ENCODE measurements at regions of chr1 and their contacts with region 1.

Region 1: GRCh38 chr1:198157241-198157846 is 546 bp downstream of the NEK7 start:
- DNase-seq: peak; percentile 63 to 81 (median 79)
- ATAC-seq: peak; percentile 65
- H3K4me3 ChIP-seq: peak overlapping the region; percentile 99
- H3K4me3 Mint-ChIP-seq: peak overlapping the region; percentile 97 to 100 (median 100)
- H3K27ac ChIP-seq: peak overlapping the region; percentile 96
- H3K27ac Mint-ChIP-seq: peak overlapping the region; percentile 97 to 100 (median 99)
- H3K4me1 ChIP-seq: peaks cover 28 to 33% of the 10 kb centered on the region in 2 donors
- H3K4me1 Mint-ChIP-seq: peaks cover 26 to 53% (median 48%) of the 10 kb centered on the region in 7 donors
- H3K27me3 ChIP-seq: no peaks in the 10 kb centered on the region
- H3K27me3 Mint-ChIP-seq: no peaks in the 10 kb centered on the region

Region 2: DNA sequence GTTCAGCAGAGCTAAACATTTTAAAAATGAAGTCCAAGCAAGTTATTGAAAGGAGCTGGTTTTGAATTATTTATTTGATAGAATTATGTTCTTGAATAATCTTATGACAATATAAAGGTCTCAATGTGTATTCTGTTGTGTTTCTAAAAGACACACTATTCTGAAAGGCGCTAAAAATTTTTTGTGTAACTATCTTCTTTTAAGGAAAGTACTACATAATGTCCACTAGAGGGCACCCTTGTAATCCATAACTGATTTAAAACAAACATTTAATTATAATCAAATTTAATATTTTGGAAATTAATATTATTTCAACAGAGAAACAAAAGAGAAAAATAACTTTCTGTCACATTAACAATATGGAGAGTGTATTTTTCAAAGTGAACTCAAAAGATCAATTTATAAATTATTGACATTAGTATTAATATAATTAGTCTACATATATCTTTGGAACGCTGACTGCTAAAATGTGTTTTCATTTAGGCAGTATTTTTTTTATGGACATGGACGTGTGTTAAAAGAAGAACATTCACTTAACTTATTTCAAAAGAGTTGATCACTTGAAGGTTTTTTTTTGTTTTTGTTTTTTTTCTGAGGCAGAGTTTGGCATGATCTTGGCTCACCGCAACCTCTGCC is 630.5 kb before region 1 on chr1:
- CTCF ChIA-PET with region 1: no interaction called
- POLR2A ChIA-PET with region 1: no interaction called
- intact Hi-C with region 1: loop called in 1 of 2 experiments (anchors 2 kb)
- DNase-seq: peak in 6 of 9 donors; percentile 9 to 53 (median 37)
- ATAC-seq: peak; percentile 69
- H3K4me3 ChIP-seq: no peak overlapping the region
- H3K4me3 Mint-ChIP-seq: no peak overlapping the region
- H3K27ac ChIP-seq: no peak overlapping the region
- H3K27ac Mint-ChIP-seq: no peak overlapping the region
- H3K4me1 ChIP-seq: no peaks in the 10 kb centered on the region
- H3K4me1 Mint-ChIP-seq: no peaks in the 10 kb centered on the region
- H3K27me3 ChIP-seq: no peaks in the 10 kb centered on the region
- H3K27me3 Mint-ChIP-seq: no peaks in the 10 kb centered on the region

Region 3: DNA sequence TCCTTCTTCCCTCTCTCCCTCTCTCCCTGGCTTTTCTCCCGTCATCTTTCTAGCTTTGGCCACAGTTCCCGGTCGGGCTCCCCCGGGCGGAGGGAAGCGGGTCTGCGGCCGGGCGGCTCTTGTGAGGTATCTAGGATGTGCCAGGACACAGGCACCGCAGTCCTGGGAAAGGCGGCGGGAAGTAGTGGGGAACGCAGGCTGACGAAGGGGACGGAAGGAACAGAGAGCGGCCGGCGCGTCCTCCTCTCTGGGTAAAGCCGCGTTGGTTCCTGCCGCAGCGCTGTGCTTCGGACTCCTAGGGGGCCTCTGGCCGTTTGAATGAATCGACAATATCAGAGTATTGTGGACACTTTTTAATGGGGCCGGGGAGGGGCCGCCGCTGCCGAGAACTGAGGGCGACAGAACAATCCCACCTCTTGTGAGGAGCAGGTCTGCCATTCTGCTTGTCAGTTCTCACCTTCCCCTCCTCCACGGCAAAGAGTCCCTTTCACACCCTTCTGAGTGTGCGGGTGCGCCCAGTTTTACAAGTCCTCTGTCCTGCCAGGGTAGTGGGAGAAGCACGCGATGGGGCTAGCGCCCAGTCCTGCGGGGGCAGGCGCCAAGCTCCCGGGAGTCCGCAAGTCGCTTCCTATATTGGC is 241.4 kb before region 1 on chr1:
- CTCF ChIA-PET with region 1: no interaction called
- POLR2A ChIA-PET with region 1: no interaction called
- intact Hi-C with region 1: loop called (anchors 2 kb)
- DNase-seq: peak in 1 of 9 donors; percentile 9
- ATAC-seq: no peak
- H3K4me3 ChIP-seq: no peak overlapping the region
- H3K4me3 Mint-ChIP-seq: peak overlapping the region in 9 of 10 donors; percentile 44 to 83 (median 68)
- H3K27ac ChIP-seq: no peak overlapping the region
- H3K27ac Mint-ChIP-seq: peak overlapping the region in 1 of 9 donors; percentile 60
- H3K4me1 ChIP-seq: peaks cover 59 to 72% of the 10 kb centered on the region in 2 donors
- H3K4me1 Mint-ChIP-seq: peaks cover 60 to 93% (median 85%) of the 10 kb centered on the region in 7 donors
- H3K27me3 ChIP-seq: peaks cover 69 to 84% of the 10 kb centered on the region in 2 donors
- H3K27me3 Mint-ChIP-seq: peaks cover 92 to 100% (median 96%) of the 10 kb centered on the region in 5 donors

Region 4: GRCh38 chr1:198175423-198176170 is 18.3 kb after region 1 on chr1:
- CTCF ChIA-PET with region 1: interaction called, 12 read pairs
- POLR2A ChIA-PET with region 1: interaction called, 150 read pairs
- intact Hi-C with region 1: loop called (anchors 1 to 2 kb)
- DNase-seq: peak in 7 of 9 donors; percentile 29 to 63 (median 51)
- ATAC-seq: peak; percentile 80
- H3K4me3 ChIP-seq: peak overlapping the region; percentile 8
- H3K4me3 Mint-ChIP-seq: peak overlapping the region; percentile 32 to 85 (median 67)
- H3K27ac ChIP-seq: peak overlapping the region; percentile 59
- H3K27ac Mint-ChIP-seq: peak overlapping the region; percentile 19 to 97 (median 93)
- H3K4me1 ChIP-seq: peaks cover 80 to 83% of the 10 kb centered on the region in 2 donors
- H3K4me1 Mint-ChIP-seq: peaks cover 64 to 91% (median 84%) of the 10 kb centered on the region in 7 donors
- H3K27me3 ChIP-seq: no peaks in the 10 kb centered on the region
- H3K27me3 Mint-ChIP-seq: no peaks in the 10 kb centered on the region

Region 5: GRCh38 chr1:198359024-198359653 is 201.8 kb after region 1 on chr1:
- CTCF ChIA-PET with region 1: no interaction called
- POLR2A ChIA-PET with region 1: no interaction called
- intact Hi-C with region 1: loop called (anchors 1 to 5 kb)
- DNase-seq: peak in 5 of 9 donors; percentile 3 to 17 (median 7)
- ATAC-seq: no peak
- H3K4me3 ChIP-seq: no peak overlapping the region
- H3K4me3 Mint-ChIP-seq: no peak overlapping the region
- H3K27ac ChIP-seq: no peak overlapping the region
- H3K27ac Mint-ChIP-seq: no peak overlapping the region
- H3K4me1 ChIP-seq: no peaks in the 10 kb centered on the region
- H3K4me1 Mint-ChIP-seq: peaks cover 0 to 3% (median 0%) of the 10 kb centered on the region in 7 donors
- H3K27me3 ChIP-seq: no peaks in the 10 kb centered on the region
- H3K27me3 Mint-ChIP-seq: peaks cover 0 to 21% (median 3%) of the 10 kb centered on the region in 5 donors

Region 6: DNA sequence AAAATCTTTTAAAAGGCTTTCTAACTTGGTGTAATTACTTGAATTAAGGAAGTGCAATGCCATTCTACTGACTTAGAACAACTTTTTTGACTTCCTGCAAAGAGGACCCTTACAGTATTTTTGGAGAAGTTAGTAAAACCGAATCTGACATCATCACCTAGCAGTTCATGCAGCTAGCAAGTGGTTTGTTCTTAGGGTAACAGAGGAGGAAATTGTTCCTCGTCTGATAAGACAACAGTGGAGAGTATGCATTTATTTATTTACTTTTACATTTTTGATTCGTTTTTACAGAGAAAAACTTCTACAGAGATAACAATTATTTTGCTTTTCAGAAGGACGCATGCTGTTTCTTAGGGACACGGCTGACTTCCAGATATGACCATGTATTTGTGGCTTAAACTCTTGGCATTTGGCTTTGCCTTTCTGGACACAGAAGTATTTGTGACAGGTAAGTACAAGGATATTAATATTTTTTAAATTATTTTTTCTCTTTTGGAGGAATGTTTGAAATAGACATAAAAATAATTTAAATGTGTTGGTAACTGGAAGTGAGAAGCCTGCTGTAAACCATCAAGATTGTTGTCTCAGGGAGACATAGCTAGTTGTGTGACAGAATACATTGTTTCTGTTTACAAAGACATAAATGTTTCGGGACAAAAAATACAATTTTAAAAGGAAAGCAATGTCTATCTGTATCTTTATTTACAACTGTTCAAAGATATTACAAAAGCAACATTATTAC is 481.7 kb after region 1 on chr1 and contains the start of gene PTPRC:
- CTCF ChIA-PET with region 1: no interaction called
- POLR2A ChIA-PET with region 1: no interaction called
- intact Hi-C with region 1: loop called (anchors 5 kb)
- DNase-seq: peak in 7 of 9 donors; percentile 46 to 78 (median 68)
- ATAC-seq: peak; percentile 81
- H3K4me3 ChIP-seq: peak within 1 kb of the TSS; percentile 81
- H3K4me3 Mint-ChIP-seq: peak within 1 kb of the TSS; percentile 77 to 100 (median 92)
- H3K27ac ChIP-seq: peak within 1 kb of the TSS; percentile 94
- H3K27ac Mint-ChIP-seq: peak within 1 kb of the TSS; percentile 86 to 98 (median 96)
- H3K4me1 ChIP-seq: peaks cover 31 to 40% of the 10 kb centered on the region in 2 donors
- H3K4me1 Mint-ChIP-seq: peaks cover 39 to 60% (median 52%) of the 10 kb centered on the region in 7 donors
- H3K27me3 ChIP-seq: no peaks in the 10 kb centered on the region
- H3K27me3 Mint-ChIP-seq: no peaks in the 10 kb centered on the region
- total RNA-seq, gene PTPRC: 739 to 1,121 (median 1,015) TPM

Measured in naive thymus-derived CD4-positive, alpha-beta T cell (primary cell).